GM13977 (cell line): ENCODE measurements at regions of chr10 and their contacts with region 1.

Region 1: DNA sequence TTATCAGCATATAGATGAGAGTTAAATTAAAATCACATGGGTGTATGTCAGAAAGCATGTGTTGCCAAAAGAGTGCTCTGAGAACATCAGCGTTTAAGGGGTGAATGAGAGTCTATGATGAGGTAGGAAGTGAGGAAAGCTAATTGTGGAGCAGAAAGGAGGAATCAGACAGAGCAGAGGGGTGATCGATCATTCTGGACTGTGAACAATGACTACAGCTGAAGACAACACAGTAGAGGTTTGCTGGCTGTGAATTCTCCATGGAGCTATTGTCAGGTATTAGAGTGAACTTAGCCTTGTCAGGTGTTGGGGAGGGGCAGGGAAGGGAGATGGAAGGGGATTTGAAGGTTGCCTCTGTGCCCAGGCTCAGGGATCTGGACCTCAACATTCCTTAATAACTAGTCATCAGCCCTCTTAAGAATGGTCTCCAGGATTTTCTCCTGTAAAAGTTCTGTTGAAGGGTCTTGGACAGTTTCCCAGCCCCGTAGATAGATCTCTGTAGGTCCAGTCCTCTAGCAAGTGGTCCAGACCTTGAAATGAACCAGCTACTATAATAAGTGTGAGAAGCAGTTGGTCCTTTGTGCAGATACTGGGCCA is 57.1 kb downstream of the KIF5B start:
- DNase-seq: no peak
- CTCF ChIP-seq: no peak

Region 2: GRCh38 chr10:31847515-31847914 is 151.6 kb before region 1 on chr10:
- in situ Hi-C with region 1: loop called (anchors 10 kb)
- DNase-seq: no peak
- CTCF ChIP-seq: no peak